Activated CD4-positive, alpha-beta T cell treated with anti-CD3 and anti-CD28 coated beads for 36 hours (primary cell): ENCODE measurements at regions of chr11 and their contacts with region 1.

Region 1: DNA sequence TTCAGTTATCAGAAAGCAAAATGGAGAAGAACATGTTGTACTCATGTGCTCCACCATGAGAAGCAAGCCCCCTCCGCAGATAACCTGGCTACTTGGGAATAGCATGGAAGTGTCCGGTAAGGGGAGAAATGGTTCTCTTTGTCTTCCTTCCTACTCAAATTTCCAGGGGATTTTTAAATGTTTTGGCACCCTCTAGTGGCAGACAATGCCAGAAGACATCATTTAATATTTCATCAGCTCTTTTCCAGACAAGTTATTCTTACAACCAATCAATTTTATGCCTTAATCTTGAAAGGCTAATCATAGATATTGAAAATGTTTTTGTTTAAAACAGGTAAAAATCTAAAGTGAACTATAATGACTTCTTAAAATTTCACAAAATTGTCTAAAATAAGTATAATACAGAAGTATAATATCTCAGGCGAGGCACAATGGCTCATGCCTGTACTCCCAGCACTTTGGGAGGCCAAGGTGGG is 15.7 kb downstream of the CRTAM start:
- DNase-seq: peak; percentile 54
- ATAC-seq: no peak
- H3K4me3 Mint-ChIP-seq: no peak overlapping the region
- H3K27ac Mint-ChIP-seq: no peak overlapping the region
- H3K4me1 Mint-ChIP-seq: peaks cover 46% of the 10 kb centered on the region
- H3K27me3 Mint-ChIP-seq: no peaks in the 10 kb centered on the region

Region 2: DNA sequence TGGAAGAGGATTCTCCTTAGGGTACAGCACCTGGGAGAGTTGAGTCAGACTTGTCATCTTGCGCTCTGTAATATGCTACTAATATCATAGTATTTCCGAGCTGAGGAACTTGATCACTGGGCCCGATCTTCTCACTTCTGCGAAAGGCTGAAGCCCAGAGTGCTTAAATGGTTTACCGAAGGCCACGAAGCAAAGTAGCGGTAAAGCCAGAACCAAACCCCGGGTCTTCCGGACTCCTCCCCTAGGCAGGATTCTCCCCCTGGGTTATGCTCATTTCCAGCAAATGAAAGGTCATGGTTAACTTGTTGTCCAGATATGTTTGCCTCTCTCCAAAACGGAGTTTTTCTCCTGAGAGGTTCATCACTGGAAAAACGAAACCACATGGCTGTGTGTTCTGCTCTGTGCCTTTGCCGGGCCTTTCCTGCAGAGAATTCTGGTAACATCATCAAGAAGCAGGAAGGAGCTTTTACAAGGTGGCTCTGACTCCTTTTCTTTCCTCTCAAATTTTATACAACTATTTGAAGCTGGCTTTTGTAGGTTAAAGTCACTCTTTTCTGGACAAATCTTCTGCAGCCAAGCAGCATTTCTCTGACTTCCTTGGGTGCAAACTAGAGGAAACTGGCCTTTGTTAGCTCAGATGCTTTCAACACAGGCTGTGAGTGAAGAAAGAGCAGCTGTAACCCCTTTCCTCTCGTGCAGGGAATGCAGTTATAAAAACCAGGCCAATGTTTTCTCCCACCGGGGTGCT is 163.0 kb before region 1 on chr11:
- CTCF ChIA-PET with region 1: interaction called, 5 read pairs
- POLR2A ChIA-PET with region 1: no interaction called
- intact Hi-C with region 1: loop called in 1 of 2 experiments (anchors 1 kb)
- DNase-seq: peak; percentile 35
- ATAC-seq: peak; percentile 16
- H3K4me3 Mint-ChIP-seq: peak overlapping the region; percentile 46
- H3K27ac Mint-ChIP-seq: peak overlapping the region; percentile 80
- H3K4me1 Mint-ChIP-seq: peaks cover 79% of the 10 kb centered on the region
- H3K27me3 Mint-ChIP-seq: no peaks in the 10 kb centered on the region

Region 3: GRCh38 chr11:122781378-122782195 is 72.4 kb before region 1 on chr11:
- CTCF ChIA-PET with region 1: interaction called, 12 read pairs
- POLR2A ChIA-PET with region 1: no interaction called
- intact Hi-C with region 1: loop called in 1 of 2 experiments (anchors 1 kb)
- DNase-seq: peak; percentile 87
- ATAC-seq: peak; percentile 74
- H3K4me3 Mint-ChIP-seq: no peak overlapping the region
- H3K27ac Mint-ChIP-seq: no peak overlapping the region
- H3K4me1 Mint-ChIP-seq: peaks cover 21% of the 10 kb centered on the region
- H3K27me3 Mint-ChIP-seq: no peaks in the 10 kb centered on the region

Region 4: DNA sequence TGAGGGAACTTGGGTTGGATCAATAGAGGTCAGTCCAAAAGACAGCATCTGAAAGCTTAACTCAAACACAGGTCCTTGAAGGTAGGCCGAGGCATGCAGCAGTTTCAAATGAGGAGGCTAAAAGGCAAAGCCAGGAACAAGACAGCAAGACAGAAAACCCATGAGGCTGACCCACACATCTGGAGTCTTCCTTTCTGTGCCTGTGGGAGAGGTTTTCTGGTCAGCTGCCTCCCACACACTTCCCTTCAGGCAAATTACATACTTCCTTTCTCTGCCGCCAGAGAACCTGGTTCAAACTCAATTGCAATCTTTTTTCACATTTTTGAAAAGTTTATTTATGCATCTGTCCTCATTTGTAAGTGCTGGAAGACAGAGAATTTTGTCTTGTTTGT is 45.5 kb before region 1 on chr11:
- CTCF ChIA-PET with region 1: interaction called, 30 read pairs
- POLR2A ChIA-PET with region 1: no interaction called
- intact Hi-C with region 1: loop called in 1 of 2 experiments (anchors 5 kb)
- DNase-seq: peak; percentile 35
- ATAC-seq: peak; percentile 30
- H3K4me3 Mint-ChIP-seq: no peak overlapping the region
- H3K27ac Mint-ChIP-seq: no peak overlapping the region
- H3K4me1 Mint-ChIP-seq: peaks cover 33% of the 10 kb centered on the region
- H3K27me3 Mint-ChIP-seq: no peaks in the 10 kb centered on the region

Region 5: GRCh38 chr11:122843281-122844141 is 10.5 kb before region 1 on chr11:
- CTCF ChIA-PET with region 1: interaction called, 35 read pairs
- POLR2A ChIA-PET with region 1: interaction called, 4 read pairs
- intact Hi-C with region 1: no loop called
- DNase-seq: peak; percentile 70
- ATAC-seq: peak; percentile 88
- H3K4me3 Mint-ChIP-seq: peak overlapping the region; percentile 20
- H3K27ac Mint-ChIP-seq: peak overlapping the region; percentile 89
- H3K4me1 Mint-ChIP-seq: peaks cover 34% of the 10 kb centered on the region
- H3K27me3 Mint-ChIP-seq: no peaks in the 10 kb centered on the region

Region 6: DNA sequence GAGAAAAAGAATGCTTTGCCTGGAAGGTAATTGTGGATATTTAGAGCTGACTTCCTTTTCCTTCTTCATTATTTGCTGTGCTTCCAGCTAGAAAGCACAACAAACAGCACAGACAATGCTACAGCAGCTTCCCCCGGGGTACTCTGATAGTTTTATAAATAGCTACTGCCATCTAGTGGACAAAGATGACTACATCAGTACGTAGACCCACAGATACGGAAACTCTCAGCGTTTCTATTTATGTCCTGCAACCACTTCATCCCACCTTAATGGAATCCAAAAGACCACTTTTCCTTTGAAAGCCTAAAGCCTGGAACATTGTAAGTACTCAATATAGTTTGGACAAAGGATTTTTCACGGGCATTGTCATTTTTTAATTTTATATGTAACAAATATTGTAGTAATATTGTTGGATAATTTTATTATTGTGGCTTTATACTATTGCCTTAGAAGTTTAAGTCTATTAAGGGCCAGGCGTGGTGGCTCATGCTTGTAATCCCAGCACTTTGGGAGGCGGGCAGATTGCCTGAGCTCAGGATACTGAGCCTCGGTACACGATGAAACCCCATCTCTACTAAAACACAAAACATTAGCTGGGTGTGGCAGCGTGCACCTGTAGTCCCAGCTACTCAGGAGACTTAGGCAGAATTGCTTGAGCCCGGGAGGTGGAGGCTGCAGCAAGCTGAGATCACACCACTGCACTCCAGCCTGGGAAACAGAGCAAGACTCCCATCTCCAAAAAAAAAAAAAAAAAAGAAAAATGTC is 200.5 kb after region 1 on chr11:
- CTCF ChIA-PET with region 1: interaction called, 10 read pairs
- POLR2A ChIA-PET with region 1: interaction called, 10 read pairs
- intact Hi-C with region 1: no loop called
- DNase-seq: no peak
- ATAC-seq: peak; percentile 76
- H3K4me3 Mint-ChIP-seq: no peak overlapping the region
- H3K27ac Mint-ChIP-seq: peak overlapping the region; percentile 97
- H3K4me1 Mint-ChIP-seq: peaks cover 32% of the 10 kb centered on the region
- H3K27me3 Mint-ChIP-seq: no peaks in the 10 kb centered on the region